Adrenal gland (tissue), 19 donors: ENCODE measurements at regions of chr2 and their contacts with region 1.

Region 1: GRCh38 chr2:46970334-46971288 is 55.0 kb upstream of the MCFD2 start:
- DNase-seq: peak; percentile 81 to 96 (median 95)
- H3K4me3 ChIP-seq: no peak overlapping the region
- H3K27ac ChIP-seq: peak overlapping the region; percentile 73 to 91 (median 80)
- H3K4me1 ChIP-seq: peaks cover 70 to 73% of the 10 kb centered on the region in 2 donors
- H3K27me3 ChIP-seq: no peaks in the 10 kb centered on the region
- CTCF ChIP-seq: no peak
- POLR2A ChIP-seq: peak in 1 of 2 donors; percentile 75

Region 2: DNA sequence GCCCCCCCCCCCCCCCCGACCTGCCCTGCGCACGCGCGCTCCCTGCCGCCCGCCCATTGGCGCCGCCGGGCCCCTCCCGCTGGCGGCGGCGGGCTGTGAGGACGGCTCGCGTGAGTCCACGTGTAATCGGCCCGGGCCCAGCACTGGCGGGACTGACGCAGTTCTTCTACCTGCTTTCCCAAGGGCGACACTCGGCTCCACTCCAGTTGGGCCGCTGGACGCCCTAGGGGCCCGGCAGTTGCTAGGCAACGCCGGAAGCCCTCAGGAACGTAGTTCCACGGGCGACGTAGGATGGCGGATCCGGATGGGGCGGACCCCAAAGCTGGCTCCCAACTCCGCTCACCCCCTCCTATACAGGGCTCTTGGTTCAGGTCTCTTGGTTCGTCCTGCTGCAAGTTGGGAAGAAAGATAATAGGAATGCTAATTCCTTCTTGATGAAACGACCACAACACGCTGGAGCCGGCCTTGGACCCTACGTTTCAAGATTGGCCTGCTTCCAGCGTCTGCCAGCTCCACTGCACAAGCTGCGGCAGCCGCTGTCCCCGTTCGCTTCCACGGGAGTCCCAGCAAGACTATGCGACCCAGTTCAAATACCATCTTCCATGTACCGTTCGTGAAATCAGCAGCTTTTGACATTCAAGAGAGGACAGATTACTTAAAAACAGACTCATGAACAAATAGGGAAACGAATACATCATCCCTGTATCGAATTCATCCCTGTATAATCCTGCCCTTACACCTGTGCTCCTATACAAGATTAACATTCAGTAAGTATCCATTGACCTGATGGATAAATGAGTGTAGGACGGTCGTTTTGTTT is 54.6 kb before region 1 on chr2:
- intact Hi-C with region 1: loop called in 1 of 2 experiments (anchors 10 kb)
- DNase-seq: peak; percentile 93 to 98 (median 97)
- H3K4me3 ChIP-seq: peak overlapping the region; percentile 48 to 91 (median 74)
- H3K27ac ChIP-seq: peak overlapping the region; percentile 89 to 99 (median 98)
- H3K4me1 ChIP-seq: peaks cover 30 to 50% of the 10 kb centered on the region in 2 donors
- H3K27me3 ChIP-seq: no peaks in the 10 kb centered on the region
- CTCF ChIP-seq: no peak
- POLR2A ChIP-seq: peak; percentile 38 to 83